Esophagus squamous epithelium (tissue), 5 donors: ENCODE measurements at regions of chr12 and their contacts with region 1.

Region 1: GRCh38 chr12:120640840-120641833 is 711 bp downstream of the CABP1 start:
- DNase-seq: no peak
- H3K4me3 ChIP-seq: peak overlapping the region; percentile 30 to 68 (median 43)
- H3K27ac ChIP-seq: no peak overlapping the region
- H3K4me1 ChIP-seq: peaks cover 6 to 21% (median 18%) of the 10 kb centered on the region in 3 donors
- H3K27me3 ChIP-seq: peaks cover 5 to 79% (median 17%) of the 10 kb centered on the region in 4 donors
- CTCF ChIP-seq: no peak
- POLR2A ChIP-seq: no peak

Region 2: GRCh38 chr12:120500581-120500980 is 140.6 kb before region 1 on chr12:
- intact Hi-C with region 1: no loop called
- DNase-seq: no peak
- H3K4me3 ChIP-seq: no peak overlapping the region
- H3K27ac ChIP-seq: peak overlapping the region in 1 of 4 donors; percentile 7
- H3K4me1 ChIP-seq: peaks cover 8 to 22% (median 14%) of the 10 kb centered on the region in 3 donors
- H3K27me3 ChIP-seq: no peaks in the 10 kb centered on the region
- CTCF ChIP-seq: no peak
- POLR2A ChIP-seq: no peak

Region 3: GRCh38 chr12:120588948-120589930 is 51.9 kb before region 1 on chr12:
- intact Hi-C with region 1: no loop called
- DNase-seq: no peak
- H3K4me3 ChIP-seq: no peak overlapping the region
- H3K27ac ChIP-seq: peak overlapping the region in 3 of 4 donors; percentile 39 to 57 (median 41)
- H3K4me1 ChIP-seq: peaks cover 5 to 8% (median 6%) of the 10 kb centered on the region in 3 donors
- H3K27me3 ChIP-seq: peaks cover 0 to 6% (median 0%) of the 10 kb centered on the region in 4 donors
- CTCF ChIP-seq: no peak
- POLR2A ChIP-seq: no peak

Region 4: GRCh38 chr12:120979862-120980696 is 338.9 kb after region 1 on chr12:
- intact Hi-C with region 1: loop called (anchors 10 kb)
- DNase-seq: no peak
- H3K4me3 ChIP-seq: no peak overlapping the region
- H3K27ac ChIP-seq: no peak overlapping the region
- H3K4me1 ChIP-seq: no peaks in the 10 kb centered on the region
- H3K27me3 ChIP-seq: peaks cover 0 to 5% (median 0%) of the 10 kb centered on the region in 4 donors
- CTCF ChIP-seq: no peak
- POLR2A ChIP-seq: no peak